ENCODE measurements at regions of chr13 and their contacts with region 1.

Region 1: DNA sequence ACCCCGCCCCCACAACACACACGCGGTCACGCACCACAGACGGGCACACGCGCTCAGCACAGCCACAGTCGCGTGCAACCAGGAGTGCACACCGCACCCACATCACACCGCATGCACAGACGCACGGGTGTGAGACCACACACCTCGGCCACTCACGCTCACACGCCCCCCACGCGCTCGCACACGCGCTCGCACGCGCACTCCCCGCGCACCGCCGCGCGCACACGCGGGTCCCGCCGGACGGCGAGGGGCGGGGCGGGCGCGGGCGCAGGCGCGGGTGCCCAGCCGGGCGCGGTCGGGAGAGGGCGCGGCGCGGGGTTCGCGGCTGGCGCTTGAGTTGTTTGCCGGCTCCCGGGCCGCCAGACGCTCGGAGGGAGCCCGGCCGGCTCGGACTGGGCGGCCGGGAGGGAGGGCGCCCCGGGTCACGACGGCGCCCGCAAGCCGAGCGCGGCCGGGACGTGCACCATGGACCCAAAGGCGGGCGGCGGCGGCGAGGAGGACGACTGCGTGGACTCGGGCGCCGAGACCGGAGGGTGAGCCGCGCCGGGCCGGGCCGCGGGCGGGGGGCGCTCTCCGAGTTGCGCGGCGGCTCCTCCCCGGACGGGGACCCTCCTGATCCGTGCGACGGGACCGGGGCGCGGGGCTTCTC is at the start of gene FAM124A:
- DNase-seq: peak in 6 of 10 donors; percentile 51 to 83 (median 64)
- H3K4me3 ChIP-seq: peak within 1 kb of the TSS; percentile 60 to 98 (median 88)
- H3K27ac ChIP-seq: peak within 1 kb of the TSS; percentile 75 to 100 (median 93)
- H3K27me3 ChIP-seq: no peaks in the 10 kb centered on the region
- CTCF ChIP-seq: peak in 27 of 56 donors; percentile 1 to 63 (median 34)
- total RNA-seq, gene FAM124A: 15.1 to 107 (median 29.8) TPM

Region 2: GRCh38 chr13:51148952-51149573 is 73.1 kb before region 1 on chr13:
- intact Hi-C with region 1: loop called (anchors 5 kb)
- DNase-seq: peak in 8 of 10 donors; percentile 49 to 70 (median 57)
- H3K4me3 ChIP-seq: no peak overlapping the region
- H3K27ac ChIP-seq: peak overlapping the region in 19 of 59 donors; percentile 1 to 74 (median 41)
- H3K27me3 ChIP-seq: no peaks in the 10 kb centered on the region
- CTCF ChIP-seq: peak; percentile 50 to 86 (median 75)

Region 3: GRCh38 chr13:51154029-51154555 is 68.1 kb before region 1 on chr13:
- intact Hi-C with region 1: loop called (anchors 5 kb)
- DNase-seq: no peak
- H3K4me3 ChIP-seq: no peak overlapping the region
- H3K27ac ChIP-seq: no peak overlapping the region
- H3K27me3 ChIP-seq: no peaks in the 10 kb centered on the region
- CTCF ChIP-seq: no peak

Region 4: GRCh38 chr13:51246418-51247277 is 24.5 kb after region 1 on chr13:
- intact Hi-C with region 1: loop called (anchors 2 kb)
- DNase-seq: peak; percentile 67 to 91 (median 86)
- H3K4me3 ChIP-seq: peak overlapping the region in 28 of 59 donors; percentile 0 to 41 (median 17)
- H3K27ac ChIP-seq: peak overlapping the region; percentile 81 to 100 (median 98)
- H3K27me3 ChIP-seq: no peaks in the 10 kb centered on the region
- CTCF ChIP-seq: peak in 7 of 56 donors; percentile 5 to 39 (median 10)

Region 5: GRCh38 chr13:51275101-51275500 is 52.9 kb after region 1 on chr13:
- intact Hi-C with region 1: loop called in 1 of 2 experiments (anchors 2 kb)
- DNase-seq: peak in 3 of 10 donors; percentile 54 to 66 (median 61)
- H3K4me3 ChIP-seq: no peak overlapping the region
- H3K27ac ChIP-seq: peak overlapping the region; percentile 3 to 100 (median 82)
- H3K27me3 ChIP-seq: no peaks in the 10 kb centered on the region
- CTCF ChIP-seq: peak in 1 of 56 donors; percentile 14

Region 6: GRCh38 chr13:51286135-51287002 is 64.2 kb after region 1 on chr13:
- intact Hi-C with region 1: loop called (anchors 2 kb)
- DNase-seq: peak; percentile 78 to 91 (median 88)
- H3K4me3 ChIP-seq: peak overlapping the region in 12 of 59 donors; percentile 7 to 30 (median 21)
- H3K27ac ChIP-seq: peak overlapping the region in 40 of 59 donors; percentile 4 to 79 (median 54)
- H3K27me3 ChIP-seq: no peaks in the 10 kb centered on the region
- CTCF ChIP-seq: peak; percentile 92 to 99 (median 97)

Region 7: GRCh38 chr13:51452361-51453206 is 230.4 kb after region 1 on chr13 and contains the start of gene INTS6:
- intact Hi-C with region 1: loop called in 1 of 2 experiments (anchors 10 kb)
- DNase-seq: peak in 9 of 10 donors; percentile 100
- H3K4me3 ChIP-seq: peak within 1 kb of the TSS; percentile 76 to 96 (median 90)
- H3K27ac ChIP-seq: peak within 1 kb of the TSS; percentile 89 to 100 (median 99)
- H3K27me3 ChIP-seq: no peaks in the 10 kb centered on the region
- CTCF ChIP-seq: peak in 2 of 56 donors; percentile 0 to 9
- total RNA-seq, gene INTS6: 30.1 to 60.5 (median 42.9) TPM

Measured in dorsolateral prefrontal cortex (tissue), 120 donors.